ENCODE measurements at regions of chr17 and their contacts with region 1.

Region 1: DNA sequence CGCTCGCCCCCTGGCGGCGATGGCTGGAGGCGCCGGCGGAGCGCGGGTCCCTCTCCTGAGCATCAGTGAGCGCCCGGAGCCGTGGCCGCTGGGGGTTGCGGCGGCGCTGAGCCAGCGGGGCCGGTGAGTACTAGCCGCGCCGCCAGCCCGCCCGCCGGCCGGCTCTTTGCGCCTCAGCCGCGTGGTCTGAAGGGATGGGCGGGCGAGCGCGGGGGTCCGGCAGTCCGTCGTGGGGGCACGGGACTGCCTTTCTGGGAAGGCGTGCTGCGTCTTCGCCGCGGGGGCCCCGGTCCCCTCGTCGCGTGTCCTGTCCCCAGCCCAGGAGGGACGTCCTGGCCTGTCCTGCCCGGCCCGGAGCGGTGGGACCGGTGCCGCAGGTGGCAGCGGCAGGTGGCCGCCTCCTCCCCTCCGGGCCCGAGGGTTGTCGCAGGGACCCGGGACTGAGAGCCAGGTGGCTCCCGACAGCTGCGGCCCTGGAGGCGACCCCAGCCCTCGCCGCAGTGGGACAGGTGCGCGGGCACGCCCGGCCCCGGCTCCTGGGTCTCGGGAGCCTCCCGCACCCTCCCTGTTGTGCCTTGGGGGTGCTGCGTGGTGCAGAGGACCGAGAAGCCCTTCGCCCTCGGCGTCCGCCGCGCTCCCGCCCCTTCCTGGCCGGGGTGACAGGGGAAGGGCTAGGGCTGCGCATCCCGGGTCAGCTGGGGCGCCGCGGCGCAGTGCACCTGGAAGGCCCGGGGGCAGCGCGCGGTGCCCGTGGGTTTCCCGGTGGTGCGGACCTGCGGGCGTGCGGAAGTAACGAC is at the start of gene SPECC1:
- DNase-seq: peak; percentile 3
- H3K4me3 Mint-ChIP-seq: peak within 1 kb of the TSS; percentile 87
- H3K27ac Mint-ChIP-seq: no peak within 1 kb of the TSS
- H3K4me1 Mint-ChIP-seq: peaks cover 6% of the 10 kb centered on the region
- H3K27me3 Mint-ChIP-seq: peaks cover 73% of the 10 kb centered on the region
- CTCF ChIP-seq: no peak
- total RNA-seq, gene SPECC1: 48.7 and 55.3 TPM in 2 replicates

Region 2: GRCh38 chr17:19447085-19447583 is 562.4 kb before region 1 on chr17:
- CTCF ChIA-PET with region 1: no interaction called
- POLR2A ChIA-PET with region 1: no interaction called
- intact Hi-C with region 1: no loop called
- DNase-seq: peak; percentile 73
- H3K4me3 Mint-ChIP-seq: no peak overlapping the region
- H3K27ac Mint-ChIP-seq: peak overlapping the region; percentile 93
- H3K4me1 Mint-ChIP-seq: peaks cover 27% of the 10 kb centered on the region
- H3K27me3 Mint-ChIP-seq: no peaks in the 10 kb centered on the region
- CTCF ChIP-seq: peak; percentile 88

Region 3: DNA sequence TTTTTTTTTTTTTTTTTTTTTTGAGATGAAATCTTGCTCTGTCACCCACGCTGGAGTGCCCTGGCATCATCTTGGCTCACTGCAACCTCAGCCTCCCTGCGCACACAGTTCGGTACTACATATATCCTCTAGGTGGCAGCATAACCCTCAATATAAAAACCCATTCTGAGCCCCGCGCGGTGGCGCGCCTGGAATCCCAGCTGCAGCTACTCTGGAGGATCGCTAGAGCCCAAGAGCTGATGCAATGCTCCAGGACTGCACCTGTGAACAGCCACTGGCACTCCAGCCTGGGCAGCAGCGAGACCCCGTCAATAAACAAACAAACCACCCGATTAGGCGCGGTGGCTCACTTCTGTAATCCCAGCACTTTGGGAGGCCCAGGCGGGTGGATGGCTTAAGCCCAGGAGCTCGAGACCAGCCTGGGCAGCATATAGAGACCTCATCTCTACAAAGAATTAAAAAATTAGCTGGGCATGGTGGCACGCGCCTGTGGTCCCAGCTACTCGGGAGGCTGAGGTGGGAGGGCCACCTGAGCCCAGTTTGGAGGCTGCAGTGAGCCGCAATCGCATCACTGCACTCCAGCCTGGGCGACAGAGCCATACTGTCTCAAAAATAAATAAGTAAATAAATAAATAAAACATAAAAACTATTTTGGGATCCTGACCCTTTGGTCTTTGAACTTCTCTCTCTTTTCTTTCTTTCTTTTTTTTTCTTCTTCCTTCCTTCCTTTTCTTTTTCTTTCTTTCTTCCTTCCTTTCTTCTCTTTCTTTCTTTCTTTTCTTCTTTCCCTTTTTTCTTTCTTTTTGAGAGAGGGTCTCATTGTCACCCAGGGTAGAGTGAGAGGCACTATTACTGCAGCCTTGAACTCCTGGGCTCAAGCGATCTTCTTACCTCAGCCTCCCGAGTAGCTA is 16.4 kb before region 1 on chr17:
- CTCF ChIA-PET with region 1: interaction called, 40 read pairs
- POLR2A ChIA-PET with region 1: interaction called, 6 read pairs
- intact Hi-C with region 1: loop called (anchors 1 kb)
- DNase-seq: peak; percentile 89
- H3K4me3 Mint-ChIP-seq: no peak overlapping the region
- H3K27ac Mint-ChIP-seq: peak overlapping the region; percentile 41
- H3K4me1 Mint-ChIP-seq: peaks cover 10% of the 10 kb centered on the region
- H3K27me3 Mint-ChIP-seq: peaks cover 10% of the 10 kb centered on the region
- CTCF ChIP-seq: peak; percentile 63

Region 4: GRCh38 chr17:20022701-20023100 is 13.2 kb after region 1 on chr17:
- CTCF ChIA-PET with region 1: interaction called, 37 read pairs
- POLR2A ChIA-PET with region 1: interaction called, 4 read pairs
- intact Hi-C with region 1: no loop called
- DNase-seq: peak; percentile 5
- H3K4me3 Mint-ChIP-seq: no peak overlapping the region
- H3K27ac Mint-ChIP-seq: no peak overlapping the region
- H3K4me1 Mint-ChIP-seq: no peaks in the 10 kb centered on the region
- H3K27me3 Mint-ChIP-seq: no peaks in the 10 kb centered on the region
- CTCF ChIP-seq: no peak

Region 5: DNA sequence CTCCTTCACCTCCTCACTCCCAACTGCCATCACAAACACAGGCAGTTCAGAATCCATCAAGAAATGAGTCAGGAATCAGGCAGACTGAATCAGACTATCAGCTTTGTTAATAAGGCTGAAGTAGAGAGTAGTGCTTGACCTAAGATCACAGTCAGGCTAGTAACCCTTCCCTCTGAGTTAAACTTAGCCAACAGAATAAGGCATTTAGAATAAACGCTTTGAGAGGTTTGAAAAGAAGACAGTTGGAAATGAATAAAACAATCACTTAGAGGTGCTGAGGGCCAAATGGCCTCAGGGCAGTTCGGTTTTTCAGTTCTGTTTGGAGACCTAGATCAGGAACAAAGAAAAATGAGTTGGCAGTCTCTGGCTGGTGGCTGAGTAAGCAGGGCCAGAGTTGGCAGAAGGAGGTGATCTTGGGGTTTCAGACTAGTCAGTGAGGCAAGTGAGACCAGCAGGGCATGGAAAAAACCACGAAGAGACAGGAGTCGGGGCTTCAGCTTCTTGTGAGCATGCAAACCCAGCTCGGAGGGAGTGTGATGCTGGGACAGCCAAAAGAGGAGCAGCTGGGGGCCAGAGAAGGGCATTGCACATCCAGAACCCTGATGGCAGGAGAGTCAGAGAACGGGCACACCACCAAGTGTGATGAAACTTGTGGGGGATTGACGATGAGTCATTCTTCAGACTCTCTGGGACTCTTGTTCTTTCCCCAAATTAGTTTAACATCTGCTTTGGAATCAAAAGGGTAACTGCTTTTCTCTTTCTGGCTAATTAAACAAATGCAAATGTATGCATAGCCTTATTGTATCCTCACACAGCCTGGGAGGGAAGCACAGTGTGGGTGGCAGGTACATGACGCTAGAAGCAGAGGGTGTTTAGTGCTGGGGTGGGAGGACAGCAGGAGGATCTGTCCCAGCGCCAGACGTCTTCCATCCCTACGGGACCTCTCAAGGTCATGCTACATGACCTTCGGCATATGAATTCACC is 54.5 kb after region 1 on chr17:
- CTCF ChIA-PET with region 1: interaction called, 11 read pairs
- POLR2A ChIA-PET with region 1: interaction called, 5 read pairs
- intact Hi-C with region 1: loop called (anchors 5 kb)
- DNase-seq: peak; percentile 96
- H3K4me3 Mint-ChIP-seq: peak overlapping the region; percentile 49
- H3K27ac Mint-ChIP-seq: peak overlapping the region; percentile 61
- H3K4me1 Mint-ChIP-seq: peaks cover 42% of the 10 kb centered on the region
- H3K27me3 Mint-ChIP-seq: no peaks in the 10 kb centered on the region
- CTCF ChIP-seq: no peak

Region 6: GRCh38 chr17:20073055-20073979 is 63.8 kb after region 1 on chr17:
- CTCF ChIA-PET with region 1: interaction called, 11 read pairs
- POLR2A ChIA-PET with region 1: interaction called, 3 read pairs
- intact Hi-C with region 1: no loop called
- DNase-seq: no peak
- H3K4me3 Mint-ChIP-seq: no peak overlapping the region
- H3K27ac Mint-ChIP-seq: no peak overlapping the region
- H3K4me1 Mint-ChIP-seq: no peaks in the 10 kb centered on the region
- H3K27me3 Mint-ChIP-seq: no peaks in the 10 kb centered on the region
- CTCF ChIP-seq: no peak

Region 7: DNA sequence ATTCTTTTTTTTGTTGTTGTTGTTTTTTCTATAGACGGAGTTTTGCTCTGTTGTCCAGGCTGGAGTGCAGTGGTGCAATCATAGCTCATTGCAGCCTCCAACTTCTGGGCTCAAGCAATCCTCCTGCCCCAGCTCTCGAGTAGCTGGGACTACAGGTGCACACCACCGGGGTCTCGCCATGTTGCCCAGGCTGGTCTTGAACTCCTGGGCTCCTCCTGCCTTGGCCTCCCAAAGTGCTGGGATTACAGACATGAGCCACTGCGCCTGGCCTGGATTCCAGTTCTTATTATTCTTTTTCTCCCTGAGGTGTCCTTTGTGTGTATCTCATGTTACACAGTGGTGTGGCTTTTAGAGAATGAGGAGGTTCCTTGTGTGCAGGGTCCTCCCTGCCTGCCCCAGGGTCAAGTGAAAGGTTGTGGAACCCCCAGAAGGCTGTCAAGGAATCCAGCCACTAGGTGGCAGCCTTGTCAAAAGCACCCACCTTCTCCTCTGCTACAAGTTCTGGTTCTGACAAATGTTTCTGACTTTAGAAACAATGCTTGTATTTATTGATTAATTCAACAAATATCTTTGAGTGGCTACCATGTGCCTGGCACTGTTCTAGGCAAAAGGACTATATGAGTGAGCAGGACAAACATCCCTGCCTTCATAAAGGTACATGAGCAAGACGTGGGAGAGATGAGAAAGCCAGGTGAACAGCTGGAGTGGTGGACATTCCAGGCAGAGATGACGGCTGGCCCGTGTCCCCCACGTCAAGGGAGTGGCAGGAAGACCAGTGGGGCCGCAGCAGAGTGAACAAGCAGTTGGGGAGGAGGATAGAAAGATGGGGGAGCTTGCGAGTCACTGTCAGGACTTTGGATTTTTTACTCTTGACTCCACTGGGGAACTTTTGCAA is 112.1 kb after region 1 on chr17:
- CTCF ChIA-PET with region 1: interaction called, 13 read pairs
- POLR2A ChIA-PET with region 1: no interaction called
- intact Hi-C with region 1: loop called (anchors 1 kb)
- DNase-seq: peak; percentile 77
- H3K4me3 Mint-ChIP-seq: no peak overlapping the region
- H3K27ac Mint-ChIP-seq: no peak overlapping the region
- H3K4me1 Mint-ChIP-seq: peaks cover 10% of the 10 kb centered on the region
- H3K27me3 Mint-ChIP-seq: no peaks in the 10 kb centered on the region
- CTCF ChIP-seq: peak; percentile 93

Measured in MCF 10A (cell line).